ENCODE measurements at regions of chr6 and their contacts with region 1.

Region 1: DNA sequence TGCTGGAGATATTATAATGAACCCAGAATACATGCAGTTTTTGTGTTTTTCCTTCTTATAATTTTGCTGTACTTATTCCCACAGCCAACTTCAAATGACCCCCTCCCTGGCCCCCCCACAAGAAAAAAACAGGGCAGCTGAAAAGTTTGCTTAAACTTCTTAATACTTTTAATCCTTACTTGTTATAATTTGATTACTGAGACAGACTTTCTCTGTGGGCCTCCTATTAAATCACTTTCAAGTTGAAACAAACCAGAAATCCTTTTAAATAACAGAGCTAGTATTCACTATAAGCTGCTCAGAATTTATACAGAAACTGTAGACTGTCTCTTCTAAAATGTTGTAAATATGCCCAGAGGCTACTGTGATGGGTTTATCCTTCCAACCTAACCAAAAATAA is 106.3 kb downstream of the CENPW start:
- DNase-seq: no peak
- H3K4me3 Mint-ChIP-seq: no peak overlapping the region
- H3K27ac Mint-ChIP-seq: no peak overlapping the region
- H3K4me1 Mint-ChIP-seq: no peaks in the 10 kb centered on the region
- H3K27me3 Mint-ChIP-seq: no peaks in the 10 kb centered on the region
- CTCF ChIP-seq: no peak

Region 2: GRCh38 chr6:126312013-126312663 is 134.1 kb before region 1 on chr6:
- CTCF ChIA-PET with region 1: no interaction called
- intact Hi-C with region 1: no loop called
- DNase-seq: peak; percentile 26
- H3K4me3 Mint-ChIP-seq: no peak overlapping the region
- H3K27ac Mint-ChIP-seq: no peak overlapping the region
- H3K4me1 Mint-ChIP-seq: peaks cover 48% of the 10 kb centered on the region
- H3K27me3 Mint-ChIP-seq: no peaks in the 10 kb centered on the region
- CTCF ChIP-seq: peak; percentile 19

Region 3: GRCh38 chr6:126380072-126380583 is 66.1 kb before region 1 on chr6:
- CTCF ChIA-PET with region 1: no interaction called
- intact Hi-C with region 1: no loop called
- DNase-seq: no peak
- H3K4me3 Mint-ChIP-seq: no peak overlapping the region
- H3K27ac Mint-ChIP-seq: no peak overlapping the region
- H3K4me1 Mint-ChIP-seq: no peaks in the 10 kb centered on the region
- H3K27me3 Mint-ChIP-seq: no peaks in the 10 kb centered on the region
- CTCF ChIP-seq: no peak

Region 4: DNA sequence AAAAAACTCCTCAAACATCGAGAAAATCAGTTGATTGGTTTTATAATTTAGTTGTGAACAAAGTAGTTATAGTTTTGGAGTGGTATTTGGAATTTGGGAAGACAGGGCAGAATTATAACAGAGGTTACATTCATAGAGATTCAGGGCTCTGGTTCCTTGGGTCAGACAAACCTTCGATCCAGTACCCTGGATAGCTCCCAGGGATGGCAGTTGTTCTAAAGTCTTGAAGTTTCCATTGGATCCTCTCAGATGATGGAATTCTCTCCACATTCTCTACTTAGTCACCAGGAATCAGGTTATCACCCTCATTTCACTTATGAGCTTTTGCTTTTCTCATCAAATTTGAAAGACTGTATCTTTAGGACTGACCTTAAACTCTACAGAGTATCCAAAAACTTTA is 178.8 kb after region 1 on chr6:
- CTCF ChIA-PET with region 1: interaction called, 15 read pairs
- intact Hi-C with region 1: no loop called
- DNase-seq: no peak
- H3K4me3 Mint-ChIP-seq: no peak overlapping the region
- H3K27ac Mint-ChIP-seq: no peak overlapping the region
- H3K4me1 Mint-ChIP-seq: peaks cover 8% of the 10 kb centered on the region
- H3K27me3 Mint-ChIP-seq: no peaks in the 10 kb centered on the region
- CTCF ChIP-seq: no peak

Measured in Calu3 (cell line).